Thyroid gland (tissue), 4 donors: ENCODE measurements at regions of chr6 and their contacts with region 1.

Region 1: GRCh38 chr6:37489660-37490361 is 9.9 kb downstream of the CCDC167 start:
- DNase-seq: no peak
- H3K4me3 ChIP-seq: no peak overlapping the region
- H3K27ac ChIP-seq: no peak overlapping the region
- H3K4me1 ChIP-seq: peaks cover 5 to 10% of the 10 kb centered on the region in 2 donors
- H3K27me3 ChIP-seq: no peaks in the 10 kb centered on the region
- CTCF ChIP-seq: no peak
- POLR2A ChIP-seq: no peak

Region 2: GRCh38 chr6:36873612-36874442 is 616.0 kb before region 1 on chr6:
- intact Hi-C with region 1: no loop called
- DNase-seq: peak in 1 of 2 donors; percentile 37
- H3K4me3 ChIP-seq: peak overlapping the region; percentile 38 to 94 (median 74)
- H3K27ac ChIP-seq: peak overlapping the region in 1 of 3 donors; percentile 85
- H3K4me1 ChIP-seq: peaks cover 20 to 24% of the 10 kb centered on the region in 2 donors
- H3K27me3 ChIP-seq: no peaks in the 10 kb centered on the region
- CTCF ChIP-seq: peak in 1 of 6 experiments; percentile 16
- POLR2A ChIP-seq: no peak

Region 3: GRCh38 chr6:37566111-37566949 is 76.5 kb after region 1 on chr6:
- intact Hi-C with region 1: loop called (anchors 5 kb)
- DNase-seq: peak; percentile 33 to 44
- H3K4me3 ChIP-seq: no peak overlapping the region
- H3K27ac ChIP-seq: no peak overlapping the region
- H3K4me1 ChIP-seq: peaks cover 6 to 10% of the 10 kb centered on the region in 2 donors
- H3K27me3 ChIP-seq: peaks cover 6% of the 10 kb centered on the region
- CTCF ChIP-seq: peak in 5 of 6 experiments; percentile 49 to 74 (median 55)
- POLR2A ChIP-seq: no peak